ENCODE measurements at regions of chr4 and their contacts with region 1.

Region 1: DNA sequence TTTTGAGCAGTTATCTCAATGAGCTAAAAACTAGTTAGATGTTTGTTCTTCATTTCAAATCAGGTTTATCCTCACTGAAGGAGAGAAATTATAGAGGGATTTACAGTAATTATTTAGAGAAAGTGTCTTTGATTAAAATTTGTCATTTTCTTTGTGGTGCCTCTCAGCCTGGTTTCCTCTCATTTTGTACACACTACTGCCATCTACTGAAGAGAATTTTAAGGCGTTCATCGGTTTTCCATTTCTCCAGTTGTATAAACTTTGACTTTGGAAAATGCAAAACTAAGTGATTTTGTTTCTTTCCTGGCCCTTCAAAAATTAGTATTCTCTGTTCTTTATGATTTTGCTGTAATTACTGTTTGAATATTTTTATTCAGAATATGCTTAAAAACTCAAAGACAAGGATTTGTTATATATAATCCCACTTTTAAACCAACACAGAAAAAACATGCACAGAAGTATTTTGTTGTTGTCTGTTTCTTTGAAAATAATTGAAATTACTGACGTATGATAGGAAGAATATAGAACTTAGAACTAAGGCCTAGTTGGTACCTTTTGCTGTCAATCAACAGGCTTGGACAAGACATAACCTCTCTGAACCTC is 34.4 kb upstream of the ANXA3 start:
- DNase-seq: no peak
- H3K4me3 ChIP-seq: no peak overlapping the region
- H3K27ac ChIP-seq: no peak overlapping the region
- H3K4me1 ChIP-seq: no peaks in the 10 kb centered on the region
- H3K27me3 ChIP-seq: no peaks in the 10 kb centered on the region
- CTCF ChIP-seq: peak; percentile 58

Region 2: GRCh38 chr4:77956917-77957316 is 560.2 kb before region 1 on chr4:
- intact Hi-C with region 1: loop called (anchors 2 kb)
- DNase-seq: no peak
- H3K4me3 ChIP-seq: no peak overlapping the region
- H3K27ac ChIP-seq: no peak overlapping the region
- H3K4me1 ChIP-seq: no peaks in the 10 kb centered on the region
- H3K27me3 ChIP-seq: no peaks in the 10 kb centered on the region
- CTCF ChIP-seq: no peak

Region 3: GRCh38 chr4:78061939-78062570 is 455.1 kb before region 1 on chr4:
- intact Hi-C with region 1: loop called (anchors 5 kb)
- DNase-seq: no peak
- H3K4me3 ChIP-seq: no peak overlapping the region
- H3K27ac ChIP-seq: no peak overlapping the region
- H3K4me1 ChIP-seq: no peaks in the 10 kb centered on the region
- H3K27me3 ChIP-seq: no peaks in the 10 kb centered on the region
- CTCF ChIP-seq: no peak